Motor neuron (in vitro differentiated cells): ENCODE measurements at regions of chr1 and their contacts with region 1.

Region 1: GRCh38 chr1:29394521-29395225 is 158.4 kb downstream of the PTPRU start:
- ATAC-seq: no peak
- H3K4me3 ChIP-seq: no peak overlapping the region
- H3K27ac ChIP-seq: no peak overlapping the region
- H3K4me1 ChIP-seq: peaks cover 0 to 5% of the 10 kb centered on the region in 2 donors

Region 2: GRCh38 chr1:29502911-29503840 is 108.5 kb after region 1 on chr1:
- in situ Hi-C with region 1: no loop called
- ATAC-seq: peak in 5 of 8 experiments; percentile 30 to 77 (median 58)
- H3K4me3 ChIP-seq: no peak overlapping the region
- H3K27ac ChIP-seq: no peak overlapping the region
- H3K4me1 ChIP-seq: peaks cover 20 to 44% of the 10 kb centered on the region in 2 donors

Region 3: GRCh38 chr1:30407865-30408580 is 1013.4 kb after region 1 on chr1:
- in situ Hi-C with region 1: loop called in 3 of 9 experiments (anchors 5 kb)
- ATAC-seq: peak in 1 of 8 experiments; percentile 20
- H3K4me3 ChIP-seq: no peak overlapping the region
- H3K27ac ChIP-seq: no peak overlapping the region
- H3K4me1 ChIP-seq: peaks cover 0 to 23% of the 10 kb centered on the region in 2 donors